ENCODE measurements at regions of chr5 and their contacts with region 1.

Region 1: DNA sequence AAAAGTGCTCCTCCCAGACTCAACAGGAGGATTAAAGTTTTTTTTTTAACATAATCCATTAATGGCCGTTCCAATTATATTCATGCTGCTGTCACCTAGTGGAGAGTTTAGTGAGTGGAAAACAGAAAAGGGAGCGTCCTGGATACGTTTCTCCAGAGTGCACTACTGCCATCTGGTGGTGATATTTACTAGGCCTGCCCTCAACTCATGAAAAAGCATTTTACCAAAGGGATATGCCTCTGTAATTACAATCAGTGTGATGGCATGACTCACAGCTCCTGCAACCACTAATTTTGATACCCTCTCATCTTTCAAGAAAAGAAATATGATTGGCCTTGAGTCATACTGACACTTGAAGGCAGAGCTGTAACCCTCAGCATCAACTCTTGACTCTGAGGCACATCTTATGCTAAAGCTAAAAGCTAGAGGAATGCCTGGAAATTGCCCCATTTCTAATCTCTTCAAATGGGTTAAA is 20.0 kb downstream of the MINAR2 start:
- DNase-seq: peak; percentile 97
- H3K4me3 Mint-ChIP-seq: no peak overlapping the region
- H3K27ac Mint-ChIP-seq: no peak overlapping the region
- H3K4me1 Mint-ChIP-seq: peaks cover 5% of the 10 kb centered on the region
- H3K27me3 Mint-ChIP-seq: no peaks in the 10 kb centered on the region
- CTCF ChIP-seq: peak; percentile 99

Region 2: GRCh38 chr5:129120158-129120581 is 647.8 kb before region 1 on chr5:
- CTCF ChIA-PET with region 1: interaction called, 22 read pairs
- POLR2A ChIA-PET with region 1: no interaction called
- intact Hi-C with region 1: no loop called
- DNase-seq: no peak
- H3K4me3 Mint-ChIP-seq: no peak overlapping the region
- H3K27ac Mint-ChIP-seq: no peak overlapping the region
- H3K4me1 Mint-ChIP-seq: no peaks in the 10 kb centered on the region
- H3K27me3 Mint-ChIP-seq: no peaks in the 10 kb centered on the region
- CTCF ChIP-seq: no peak

Region 3: DNA sequence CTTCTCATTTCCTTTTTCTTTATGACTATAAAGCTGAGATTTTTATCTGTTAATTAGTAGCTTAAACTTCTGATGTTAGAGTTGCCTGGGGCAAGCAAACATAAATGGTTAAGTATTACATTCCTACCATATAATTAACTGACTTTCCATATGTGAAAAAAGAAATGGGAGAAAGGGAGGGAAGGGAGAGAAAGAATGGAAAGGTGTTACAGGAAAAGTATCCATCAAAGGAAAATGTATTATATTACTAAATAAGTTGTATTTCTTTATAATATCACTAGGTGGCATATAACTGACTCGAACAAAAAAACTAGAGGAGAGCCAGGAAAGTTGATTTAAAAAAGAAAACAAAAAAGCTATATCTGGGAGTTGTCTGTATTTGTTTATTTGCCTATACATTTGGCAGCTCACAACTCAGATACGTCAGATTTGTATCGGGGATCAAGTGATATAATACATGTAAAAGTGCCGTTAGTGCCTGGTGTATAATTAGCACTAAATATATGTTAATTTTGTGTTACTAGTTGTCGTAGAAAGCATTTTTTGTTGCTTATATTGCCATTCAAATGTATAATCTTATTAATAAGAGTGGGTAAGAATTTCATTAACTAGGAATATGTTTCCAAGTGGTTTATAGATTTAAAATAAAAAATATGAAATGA is 367.5 kb before region 1 on chr5:
- CTCF ChIA-PET with region 1: interaction called, 110 read pairs
- POLR2A ChIA-PET with region 1: interaction called, 3 read pairs
- intact Hi-C with region 1: loop called (anchors 1 kb)
- DNase-seq: peak; percentile 25
- H3K4me3 Mint-ChIP-seq: no peak overlapping the region
- H3K27ac Mint-ChIP-seq: no peak overlapping the region
- H3K4me1 Mint-ChIP-seq: no peaks in the 10 kb centered on the region
- H3K27me3 Mint-ChIP-seq: peaks cover 99% of the 10 kb centered on the region
- CTCF ChIP-seq: peak; percentile 40

Region 4: DNA sequence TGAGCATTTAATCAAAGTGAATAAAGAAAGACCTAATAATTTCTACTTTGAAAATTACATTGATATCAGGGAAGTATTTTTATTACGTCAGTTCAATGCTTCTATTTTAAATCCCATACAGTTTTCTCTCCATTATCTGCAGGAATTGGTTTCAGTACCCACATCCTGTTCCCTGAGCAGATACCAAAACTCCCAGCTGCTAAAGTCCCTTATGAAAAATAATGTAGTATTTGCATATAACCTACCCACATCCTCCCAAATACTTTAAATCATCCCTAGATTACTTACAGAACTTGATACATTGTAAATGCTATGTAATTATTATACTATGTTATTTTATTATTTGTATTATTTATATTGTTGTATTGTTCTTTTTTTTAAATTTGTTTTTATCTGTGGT is 145.4 kb before region 1 on chr5:
- CTCF ChIA-PET with region 1: no interaction called
- POLR2A ChIA-PET with region 1: no interaction called
- intact Hi-C with region 1: no loop called
- DNase-seq: no peak
- H3K4me3 Mint-ChIP-seq: no peak overlapping the region
- H3K27ac Mint-ChIP-seq: no peak overlapping the region
- H3K4me1 Mint-ChIP-seq: peaks cover 15% of the 10 kb centered on the region
- H3K27me3 Mint-ChIP-seq: peaks cover 18% of the 10 kb centered on the region
- CTCF ChIP-seq: no peak

Region 5: GRCh38 chr5:129781594-129781993 is 13.7 kb after region 1 on chr5:
- CTCF ChIA-PET with region 1: interaction called, 57 read pairs
- POLR2A ChIA-PET with region 1: no interaction called
- intact Hi-C with region 1: no loop called
- DNase-seq: no peak
- H3K4me3 Mint-ChIP-seq: no peak overlapping the region
- H3K27ac Mint-ChIP-seq: no peak overlapping the region
- H3K4me1 Mint-ChIP-seq: no peaks in the 10 kb centered on the region
- H3K27me3 Mint-ChIP-seq: no peaks in the 10 kb centered on the region
- CTCF ChIP-seq: no peak

Region 6: GRCh38 chr5:129852747-129853352 is 84.9 kb after region 1 on chr5:
- CTCF ChIA-PET with region 1: interaction called, 931 read pairs
- POLR2A ChIA-PET with region 1: interaction called, 78 read pairs
- intact Hi-C with region 1: loop called (anchors 1 kb)
- DNase-seq: peak; percentile 94
- H3K4me3 Mint-ChIP-seq: no peak overlapping the region
- H3K27ac Mint-ChIP-seq: no peak overlapping the region
- H3K4me1 Mint-ChIP-seq: peaks cover 10% of the 10 kb centered on the region
- H3K27me3 Mint-ChIP-seq: peaks cover 11% of the 10 kb centered on the region
- CTCF ChIP-seq: peak; percentile 99

Region 7: GRCh38 chr5:129930221-129930620 is 162.3 kb after region 1 on chr5:
- CTCF ChIA-PET with region 1: no interaction called
- POLR2A ChIA-PET with region 1: no interaction called
- intact Hi-C with region 1: no loop called
- DNase-seq: no peak
- H3K4me3 Mint-ChIP-seq: no peak overlapping the region
- H3K27ac Mint-ChIP-seq: no peak overlapping the region
- H3K4me1 Mint-ChIP-seq: peaks cover 3% of the 10 kb centered on the region
- H3K27me3 Mint-ChIP-seq: no peaks in the 10 kb centered on the region
- CTCF ChIP-seq: no peak

Region 8: GRCh38 chr5:130017173-130017572 is 249.2 kb after region 1 on chr5:
- CTCF ChIA-PET with region 1: no interaction called
- POLR2A ChIA-PET with region 1: no interaction called
- intact Hi-C with region 1: no loop called
- DNase-seq: no peak
- H3K4me3 Mint-ChIP-seq: no peak overlapping the region
- H3K27ac Mint-ChIP-seq: no peak overlapping the region
- H3K4me1 Mint-ChIP-seq: peaks cover 7% of the 10 kb centered on the region
- H3K27me3 Mint-ChIP-seq: no peaks in the 10 kb centered on the region
- CTCF ChIP-seq: no peak

Region 9: DNA sequence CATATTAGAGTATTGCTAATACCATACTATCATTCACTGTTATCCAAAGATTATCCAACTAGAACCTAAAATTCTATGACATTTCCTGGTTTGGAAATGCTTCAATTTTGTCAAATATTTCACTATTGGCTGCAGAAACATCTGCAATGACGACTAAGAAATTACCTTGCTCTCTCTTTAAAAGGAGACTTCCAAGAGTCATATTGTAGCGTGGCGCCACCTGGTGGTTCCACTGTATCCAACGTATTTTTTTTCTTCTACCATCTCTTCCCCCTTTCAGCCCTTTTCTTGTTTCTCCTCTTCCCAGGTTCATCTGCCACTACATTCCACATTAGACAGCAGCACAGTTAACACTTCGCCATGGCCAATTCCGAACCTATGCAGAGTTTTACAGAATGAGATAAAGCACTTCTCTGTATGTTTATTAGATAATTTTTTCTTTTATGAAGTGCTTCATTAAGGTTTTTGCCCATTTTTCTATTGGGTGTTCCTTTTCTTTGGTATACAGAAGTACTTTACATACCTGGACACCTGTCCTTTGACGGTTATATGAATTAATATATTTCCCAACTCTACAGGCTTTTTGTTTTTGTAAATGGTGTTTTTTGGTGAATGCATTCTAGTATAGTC is 1649.4 kb after region 1 on chr5:
- CTCF ChIA-PET with region 1: no interaction called
- POLR2A ChIA-PET with region 1: no interaction called
- intact Hi-C with region 1: loop called (anchors 2 kb)
- DNase-seq: peak; percentile 85
- H3K4me3 Mint-ChIP-seq: no peak overlapping the region
- H3K27ac Mint-ChIP-seq: no peak overlapping the region
- H3K4me1 Mint-ChIP-seq: peaks cover 5% of the 10 kb centered on the region
- H3K27me3 Mint-ChIP-seq: no peaks in the 10 kb centered on the region
- CTCF ChIP-seq: peak; percentile 89